HAP-1 (cell line): ENCODE measurements at regions of chr17 and their contacts with region 1.

Region 1: GRCh38 chr17:65294179-65294720 is 157.1 kb downstream of the RGS9 start:
- DNase-seq: peak; percentile 49 to 72
- H3K4me3 ChIP-seq: no peak overlapping the region
- H3K4me1 ChIP-seq: no peaks in the 10 kb centered on the region
- H3K27me3 ChIP-seq: no peaks in the 10 kb centered on the region

Region 2: DNA sequence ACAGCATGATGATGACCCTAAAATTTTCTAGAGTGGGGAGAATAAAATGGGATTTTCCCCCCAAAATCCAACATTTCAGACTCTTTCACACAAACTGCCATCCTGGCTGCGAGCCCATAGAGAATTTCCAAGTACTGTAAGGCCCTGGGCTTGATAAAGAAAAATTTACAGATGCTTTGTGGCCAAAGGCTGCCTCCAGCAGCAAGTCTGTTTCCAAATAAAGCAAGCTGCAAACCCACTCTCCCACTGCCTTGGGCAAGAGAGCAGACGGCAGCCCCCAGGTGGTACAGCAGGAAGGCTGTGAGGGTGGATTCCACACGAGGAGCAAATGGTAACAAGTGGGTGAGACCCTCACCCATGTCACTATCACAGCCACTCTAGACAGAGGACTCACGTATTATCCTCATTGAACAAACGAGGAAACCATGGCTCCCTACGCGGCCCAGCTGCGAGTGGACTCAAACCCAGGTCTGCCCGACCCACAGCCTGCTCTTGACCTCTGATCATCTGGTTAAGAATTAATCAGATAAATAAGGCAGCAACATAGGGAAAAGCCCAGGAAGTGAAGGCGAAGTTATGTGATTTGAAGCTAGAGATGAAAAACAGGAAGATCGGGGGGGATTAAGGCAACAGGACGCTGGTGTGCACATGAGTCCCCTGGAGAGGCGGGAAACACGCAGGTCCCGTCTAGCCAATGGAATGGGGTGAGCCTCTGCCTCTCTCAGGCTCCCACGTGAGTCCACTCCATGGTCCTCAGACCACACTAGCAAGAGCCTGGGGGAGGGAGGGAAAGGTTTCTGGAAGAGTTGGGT is 229.8 kb after region 1 on chr17:
- in situ Hi-C with region 1: no loop called
- DNase-seq: no peak
- H3K4me3 ChIP-seq: no peak overlapping the region
- H3K4me1 ChIP-seq: no peaks in the 10 kb centered on the region
- H3K27me3 ChIP-seq: no peaks in the 10 kb centered on the region

Region 3: GRCh38 chr17:65988081-65988850 is 694.0 kb after region 1 on chr17:
- in situ Hi-C with region 1: loop called (anchors 25 kb)
- DNase-seq: peak; percentile 21 to 37
- H3K4me3 ChIP-seq: no peak overlapping the region
- H3K4me1 ChIP-seq: no peaks in the 10 kb centered on the region
- H3K27me3 ChIP-seq: no peaks in the 10 kb centered on the region